ENCODE measurements at regions of chr1 and their contacts with region 1.

Region 1: GRCh38 chr1:9110669-9111356 is 18.1 kb downstream of the GPR157 start:
- DNase-seq: peak; percentile 85
- ATAC-seq: peak; percentile 95
- H3K4me3 ChIP-seq: no peak overlapping the region
- H3K4me3 Mint-ChIP-seq: no peak overlapping the region
- H3K27ac ChIP-seq: no peak overlapping the region
- H3K27ac Mint-ChIP-seq: no peak overlapping the region
- H3K4me1 ChIP-seq: peaks cover 0 to 5% of the 10 kb centered on the region in 2 donors
- H3K4me1 Mint-ChIP-seq: peaks cover 2% of the 10 kb centered on the region
- H3K27me3 ChIP-seq: no peaks in the 10 kb centered on the region
- H3K27me3 Mint-ChIP-seq: no peaks in the 10 kb centered on the region
- CTCF ChIP-seq: peak; percentile 91

Region 2: GRCh38 chr1:8598060-8598724 is 512.6 kb before region 1 on chr1:
- CTCF ChIA-PET with region 1: no interaction called
- POLR2A ChIA-PET with region 1: no interaction called
- intact Hi-C with region 1: no loop called
- DNase-seq: no peak
- ATAC-seq: no peak
- H3K4me3 ChIP-seq: no peak overlapping the region
- H3K4me3 Mint-ChIP-seq: no peak overlapping the region
- H3K27ac ChIP-seq: no peak overlapping the region
- H3K27ac Mint-ChIP-seq: no peak overlapping the region
- H3K4me1 ChIP-seq: peaks cover 13 to 24% of the 10 kb centered on the region in 2 donors
- H3K4me1 Mint-ChIP-seq: peaks cover 24% of the 10 kb centered on the region
- H3K27me3 ChIP-seq: no peaks in the 10 kb centered on the region
- H3K27me3 Mint-ChIP-seq: no peaks in the 10 kb centered on the region
- CTCF ChIP-seq: no peak

Region 3: GRCh38 chr1:9004700-9005394 is 106.0 kb before region 1 on chr1:
- CTCF ChIA-PET with region 1: interaction called, 59 read pairs
- POLR2A ChIA-PET with region 1: no interaction called
- intact Hi-C with region 1: no loop called
- DNase-seq: peak; percentile 83
- ATAC-seq: peak; percentile 79
- H3K4me3 ChIP-seq: no peak overlapping the region
- H3K4me3 Mint-ChIP-seq: no peak overlapping the region
- H3K27ac ChIP-seq: no peak overlapping the region
- H3K27ac Mint-ChIP-seq: peak overlapping the region; percentile 3
- H3K4me1 ChIP-seq: peaks cover 11 to 26% of the 10 kb centered on the region in 2 donors
- H3K4me1 Mint-ChIP-seq: peaks cover 33% of the 10 kb centered on the region
- H3K27me3 ChIP-seq: peaks cover 0 to 11% (median 2%) of the 10 kb centered on the region in 4 experiments
- H3K27me3 Mint-ChIP-seq: peaks cover 16% of the 10 kb centered on the region
- CTCF ChIP-seq: peak; percentile 91

Region 4: GRCh38 chr1:9121496-9122409 is 10.9 kb after region 1 on chr1:
- CTCF ChIA-PET with region 1: interaction called, 27 read pairs
- POLR2A ChIA-PET with region 1: no interaction called
- intact Hi-C with region 1: no loop called
- DNase-seq: peak; percentile 50
- ATAC-seq: peak; percentile 76
- H3K4me3 ChIP-seq: no peak overlapping the region
- H3K4me3 Mint-ChIP-seq: peak overlapping the region; percentile 43
- H3K27ac ChIP-seq: no peak overlapping the region
- H3K27ac Mint-ChIP-seq: no peak overlapping the region
- H3K4me1 ChIP-seq: peaks cover 14 to 23% of the 10 kb centered on the region in 2 donors
- H3K4me1 Mint-ChIP-seq: peaks cover 36% of the 10 kb centered on the region
- H3K27me3 ChIP-seq: no peaks in the 10 kb centered on the region
- H3K27me3 Mint-ChIP-seq: no peaks in the 10 kb centered on the region
- CTCF ChIP-seq: no peak

Region 5: GRCh38 chr1:9145021-9145668 is 34.3 kb after region 1 on chr1:
- CTCF ChIA-PET with region 1: interaction called, 15 read pairs
- POLR2A ChIA-PET with region 1: no interaction called
- intact Hi-C with region 1: loop called (anchors 1 kb)
- DNase-seq: no peak
- ATAC-seq: no peak
- H3K4me3 ChIP-seq: no peak overlapping the region
- H3K4me3 Mint-ChIP-seq: no peak overlapping the region
- H3K27ac ChIP-seq: no peak overlapping the region
- H3K27ac Mint-ChIP-seq: no peak overlapping the region
- H3K4me1 ChIP-seq: no peaks in the 10 kb centered on the region
- H3K4me1 Mint-ChIP-seq: peaks cover 3% of the 10 kb centered on the region
- H3K27me3 ChIP-seq: no peaks in the 10 kb centered on the region
- H3K27me3 Mint-ChIP-seq: no peaks in the 10 kb centered on the region
- CTCF ChIP-seq: no peak

Region 6: GRCh38 chr1:9164532-9164900 is 53.7 kb after region 1 on chr1:
- CTCF ChIA-PET with region 1: interaction called, 10 read pairs
- POLR2A ChIA-PET with region 1: no interaction called
- intact Hi-C with region 1: no loop called
- DNase-seq: no peak
- ATAC-seq: peak; percentile 19
- H3K4me3 ChIP-seq: no peak overlapping the region
- H3K4me3 Mint-ChIP-seq: peak overlapping the region; percentile 81
- H3K27ac ChIP-seq: no peak overlapping the region
- H3K27ac Mint-ChIP-seq: peak overlapping the region; percentile 93
- H3K4me1 ChIP-seq: peaks cover 0 to 20% of the 10 kb centered on the region in 2 donors
- H3K4me1 Mint-ChIP-seq: peaks cover 22% of the 10 kb centered on the region
- H3K27me3 ChIP-seq: no peaks in the 10 kb centered on the region
- H3K27me3 Mint-ChIP-seq: peaks cover 2% of the 10 kb centered on the region
- CTCF ChIP-seq: no peak

Region 7: DNA sequence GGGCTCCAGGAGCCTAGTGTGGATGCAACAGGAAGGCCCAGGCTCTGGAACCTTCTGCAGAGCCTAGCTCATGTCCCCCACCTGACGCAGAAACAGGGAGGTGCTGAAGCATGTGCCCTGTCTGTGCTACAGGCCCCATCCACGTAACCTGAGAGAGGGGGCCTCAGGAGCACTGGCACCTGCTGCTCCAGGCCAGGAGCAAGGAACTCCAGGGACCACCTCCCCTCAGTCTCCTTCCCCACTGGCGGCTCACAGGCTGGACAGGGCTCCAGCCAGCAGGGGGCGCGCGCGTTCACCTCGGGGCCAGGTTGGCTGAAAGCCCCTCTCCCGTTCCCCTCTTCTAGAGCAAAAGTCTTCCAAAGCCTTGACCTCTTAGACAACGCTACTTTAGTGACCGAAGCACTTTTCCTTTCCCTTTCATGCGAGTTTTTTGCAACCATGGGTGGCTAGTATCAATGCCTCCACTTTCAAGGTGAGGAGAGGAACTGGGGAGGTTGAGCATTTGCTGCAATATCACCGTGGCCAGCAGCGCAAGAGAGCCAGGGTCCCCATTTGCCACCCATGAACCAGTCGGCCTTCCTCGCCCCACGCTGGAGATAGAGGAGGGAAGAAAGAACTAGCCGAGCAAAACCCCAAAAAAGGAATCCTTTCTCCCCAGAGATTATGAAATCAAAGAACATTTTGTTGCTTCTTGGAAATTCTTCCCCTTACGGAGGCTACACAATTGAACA is 70.5 kb after region 1 on chr1:
- CTCF ChIA-PET with region 1: interaction called, 15 read pairs
- POLR2A ChIA-PET with region 1: no interaction called
- intact Hi-C with region 1: no loop called
- DNase-seq: peak; percentile 75
- ATAC-seq: peak; percentile 62
- H3K4me3 ChIP-seq: peak overlapping the region in 4 of 5 experiments; percentile 15 to 50 (median 44)
- H3K4me3 Mint-ChIP-seq: peak overlapping the region; percentile 82
- H3K27ac ChIP-seq: no peak overlapping the region
- H3K27ac Mint-ChIP-seq: no peak overlapping the region
- H3K4me1 ChIP-seq: peaks cover 17 to 25% of the 10 kb centered on the region in 2 donors
- H3K4me1 Mint-ChIP-seq: peaks cover 18% of the 10 kb centered on the region
- H3K27me3 ChIP-seq: peaks cover 0 to 42% (median 12%) of the 10 kb centered on the region in 4 experiments
- H3K27me3 Mint-ChIP-seq: peaks cover 28% of the 10 kb centered on the region
- CTCF ChIP-seq: peak; percentile 95

Region 8: DNA sequence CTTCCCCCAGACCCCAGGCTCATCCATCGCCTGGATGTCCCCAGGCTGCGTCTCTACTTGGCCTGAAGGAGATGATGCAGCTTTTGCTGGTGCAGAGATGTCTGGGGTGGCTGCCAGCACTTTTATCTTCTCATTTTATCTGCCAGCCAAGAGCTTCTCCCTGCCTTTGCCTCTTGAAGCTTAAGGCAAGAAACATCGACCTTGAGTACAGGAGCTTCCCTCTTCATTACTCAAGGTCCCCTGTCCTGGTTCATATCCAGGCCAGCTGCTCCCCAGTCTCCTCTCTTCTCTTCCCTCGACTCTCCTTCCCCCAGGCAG is 114.6 kb after region 1 on chr1:
- CTCF ChIA-PET with region 1: no interaction called
- POLR2A ChIA-PET with region 1: no interaction called
- intact Hi-C with region 1: no loop called
- DNase-seq: no peak
- ATAC-seq: no peak
- H3K4me3 ChIP-seq: no peak overlapping the region
- H3K4me3 Mint-ChIP-seq: no peak overlapping the region
- H3K27ac ChIP-seq: no peak overlapping the region
- H3K27ac Mint-ChIP-seq: no peak overlapping the region
- H3K4me1 ChIP-seq: no peaks in the 10 kb centered on the region
- H3K4me1 Mint-ChIP-seq: no peaks in the 10 kb centered on the region
- H3K27me3 ChIP-seq: peaks cover 0 to 14% (median 0%) of the 10 kb centered on the region in 4 experiments
- H3K27me3 Mint-ChIP-seq: peaks cover 5% of the 10 kb centered on the region
- CTCF ChIP-seq: no peak

Region 9: GRCh38 chr1:9842781-9843577 is 732.2 kb after region 1 on chr1:
- CTCF ChIA-PET with region 1: no interaction called
- POLR2A ChIA-PET with region 1: no interaction called
- intact Hi-C with region 1: no loop called
- DNase-seq: no peak
- ATAC-seq: no peak
- H3K4me3 ChIP-seq: no peak overlapping the region
- H3K4me3 Mint-ChIP-seq: no peak overlapping the region
- H3K27ac ChIP-seq: no peak overlapping the region
- H3K27ac Mint-ChIP-seq: no peak overlapping the region
- H3K4me1 ChIP-seq: peaks cover 0 to 3% of the 10 kb centered on the region in 2 donors
- H3K4me1 Mint-ChIP-seq: peaks cover 5% of the 10 kb centered on the region
- H3K27me3 ChIP-seq: no peaks in the 10 kb centered on the region
- H3K27me3 Mint-ChIP-seq: no peaks in the 10 kb centered on the region
- CTCF ChIP-seq: no peak